Posterior cingulate gyrus (tissue), 11 donors: ENCODE measurements at regions of chr9 and their contacts with region 1.

Region 1: GRCh38 chr9:93302551-93303257 is 118.8 kb downstream of the WNK2 start:
- DNase-seq: peak in 3 of 10 donors; percentile 34 to 87 (median 75)

Region 2: DNA sequence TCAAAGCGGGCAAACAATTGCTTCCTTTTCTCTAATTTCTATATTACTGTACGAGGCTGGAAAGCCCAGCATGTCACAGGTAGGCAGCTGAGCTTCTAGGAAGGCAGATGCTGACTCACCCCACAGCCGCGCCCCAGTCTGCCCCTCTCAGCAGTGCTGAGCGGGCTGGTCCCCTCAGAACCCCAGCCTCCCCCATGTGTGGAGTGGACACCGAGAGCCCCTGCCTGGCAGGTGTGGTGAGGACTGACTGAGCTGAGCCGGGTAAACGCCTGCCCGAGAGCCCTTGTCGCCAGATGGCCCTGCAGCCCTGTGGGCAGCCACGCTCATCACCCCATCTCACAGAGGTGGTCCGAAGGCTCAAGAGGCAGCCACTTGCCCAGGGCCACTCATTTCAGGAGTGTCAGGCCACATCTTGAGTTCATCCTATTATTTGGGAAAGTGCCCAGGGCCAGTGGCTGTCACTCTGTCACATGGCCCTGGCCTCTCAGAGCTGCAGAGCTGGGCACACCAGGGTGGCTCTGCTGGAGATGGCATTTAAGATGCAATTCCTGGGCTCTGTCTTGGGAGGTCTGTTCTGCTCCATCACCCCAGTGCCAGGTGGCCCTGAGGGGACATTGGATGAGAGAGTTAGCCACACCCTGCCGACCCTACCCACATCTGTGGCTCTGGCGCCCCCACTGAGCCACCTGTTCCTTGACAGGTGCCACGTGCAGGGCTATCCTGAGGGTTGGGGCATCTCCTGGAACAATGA is 194.2 kb before region 1 on chr9:
- intact Hi-C with region 1: loop called (anchors 1 kb)
- DNase-seq: peak in 4 of 10 donors; percentile 6 to 83 (median 66)

Region 3: GRCh38 chr9:93159601-93160471 is 142.9 kb before region 1 on chr9:
- intact Hi-C with region 1: loop called (anchors 1 kb)
- DNase-seq: peak; percentile 63 to 97 (median 83)

Region 4: DNA sequence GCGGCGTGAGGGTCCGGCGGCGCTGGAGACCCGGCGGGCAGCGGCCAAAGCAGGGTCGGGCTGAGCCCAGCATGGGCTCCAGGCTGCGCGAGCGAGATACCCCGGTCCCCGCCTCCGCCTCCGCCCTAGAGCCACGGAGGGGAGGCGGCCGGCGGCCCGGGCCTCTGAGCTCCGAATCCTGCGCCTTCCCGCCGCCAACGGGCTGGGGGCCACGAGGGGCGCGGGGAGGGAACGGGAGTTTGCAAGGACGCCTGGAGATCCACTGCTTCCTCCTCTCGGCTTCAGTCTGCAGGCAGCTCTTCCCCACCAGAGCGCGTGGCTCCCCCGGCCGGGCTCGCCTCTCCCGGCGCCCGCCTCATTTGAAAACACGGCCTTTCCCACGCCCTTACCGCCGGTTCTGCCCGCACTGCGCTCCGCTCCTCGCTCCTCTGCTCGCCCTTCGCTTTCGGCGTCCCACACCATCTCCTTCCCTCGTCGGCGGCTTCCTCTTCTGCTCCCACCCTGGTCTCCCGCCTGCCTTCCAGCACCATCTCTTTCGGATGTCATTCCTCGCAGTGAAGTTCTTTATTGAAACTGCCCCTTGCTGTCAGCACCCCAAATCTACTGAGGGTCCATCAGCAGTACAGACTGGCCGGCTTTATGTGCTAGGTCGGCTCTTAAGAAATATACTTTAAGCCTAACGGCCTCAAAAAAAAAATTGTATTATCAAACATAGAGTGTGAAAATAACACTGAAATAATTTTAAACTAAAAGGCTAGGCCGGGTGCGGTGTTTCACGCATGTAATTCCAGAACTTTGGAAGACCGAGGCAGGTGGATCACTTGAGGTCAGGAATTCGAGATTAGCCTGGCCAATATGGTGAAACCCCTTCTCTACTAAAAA is 43.8 kb after region 1 on chr9:
- intact Hi-C with region 1: no loop called
- DNase-seq: peak in 9 of 10 donors; percentile 23 to 89 (median 35)